ENCODE measurements at regions of chr13 and their contacts with region 1.

Region 1: GRCh38 chr13:31742097-31742734 is 2.9 kb downstream of the RXFP2 start:
- DNase-seq: peak; percentile 45
- H3K4me3 Mint-ChIP-seq: no peak overlapping the region
- H3K27ac Mint-ChIP-seq: no peak overlapping the region
- H3K4me1 Mint-ChIP-seq: peaks cover 5% of the 10 kb centered on the region
- H3K27me3 Mint-ChIP-seq: peaks cover 5% of the 10 kb centered on the region

Region 2: GRCh38 chr13:31236211-31236786 is 505.9 kb before region 1 on chr13:
- intact Hi-C with region 1: loop called (anchors 1 kb)
- DNase-seq: no peak
- H3K4me3 Mint-ChIP-seq: no peak overlapping the region
- H3K27ac Mint-ChIP-seq: no peak overlapping the region
- H3K4me1 Mint-ChIP-seq: no peaks in the 10 kb centered on the region
- H3K27me3 Mint-ChIP-seq: no peaks in the 10 kb centered on the region

Region 3: GRCh38 chr13:31431722-31432137 is 310.5 kb before region 1 on chr13:
- intact Hi-C with region 1: loop called (anchors 1 kb)
- DNase-seq: peak; percentile 16
- H3K4me3 Mint-ChIP-seq: no peak overlapping the region
- H3K27ac Mint-ChIP-seq: no peak overlapping the region
- H3K4me1 Mint-ChIP-seq: no peaks in the 10 kb centered on the region
- H3K27me3 Mint-ChIP-seq: no peaks in the 10 kb centered on the region

Region 4: GRCh38 chr13:31835932-31836331 is 93.7 kb after region 1 on chr13:
- intact Hi-C with region 1: no loop called
- DNase-seq: no peak
- H3K4me3 Mint-ChIP-seq: no peak overlapping the region
- H3K27ac Mint-ChIP-seq: no peak overlapping the region
- H3K4me1 Mint-ChIP-seq: no peaks in the 10 kb centered on the region
- H3K27me3 Mint-ChIP-seq: peaks cover 6% of the 10 kb centered on the region

Region 5: DNA sequence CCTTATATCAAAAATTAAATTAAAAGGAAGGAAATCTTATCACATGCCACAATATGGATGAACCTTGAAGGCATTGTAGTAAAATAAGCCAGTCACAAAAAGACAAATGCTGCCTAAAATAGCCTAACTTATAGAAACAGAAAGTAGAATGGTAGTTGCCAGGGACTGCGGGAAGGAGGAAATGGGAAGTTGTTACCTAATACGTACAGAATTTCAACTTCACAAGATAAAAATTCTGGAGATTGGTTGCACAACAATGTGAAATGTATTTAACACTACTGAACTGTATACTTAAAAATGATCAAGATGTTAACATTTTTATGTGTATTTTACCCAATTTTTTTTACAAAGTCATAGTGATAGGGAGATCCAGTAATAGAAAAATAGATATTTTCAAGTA is 806.6 kb after region 1 on chr13:
- intact Hi-C with region 1: no loop called
- DNase-seq: no peak
- H3K4me3 Mint-ChIP-seq: no peak overlapping the region
- H3K27ac Mint-ChIP-seq: no peak overlapping the region
- H3K4me1 Mint-ChIP-seq: no peaks in the 10 kb centered on the region
- H3K27me3 Mint-ChIP-seq: peaks cover 1% of the 10 kb centered on the region